Panc1 (cell line): ENCODE measurements at regions of chr17 and their contacts with region 1.

Region 1: GRCh38 chr17:57051886-57052361 is 33.1 kb upstream of the AKAP1 start:
- DNase-seq: no peak
- ATAC-seq: no peak
- H3K4me3 ChIP-seq: no peak overlapping the region
- H3K27ac ChIP-seq: no peak overlapping the region
- H3K4me1 ChIP-seq: peaks cover 6% of the 10 kb centered on the region
- H3K27me3 ChIP-seq: no peaks in the 10 kb centered on the region
- CTCF ChIP-seq: no peak

Region 2: GRCh38 chr17:57021226-57021940 is 30.5 kb before region 1 on chr17:
- CTCF ChIA-PET with region 1: no interaction called
- POLR2A ChIA-PET with region 1: interaction called, 10 read pairs
- in situ Hi-C with region 1: no loop called
- intact Hi-C with region 1: no loop called
- DNase-seq: peak; percentile 15
- ATAC-seq: peak; percentile 56; the same call in 1 of the 2 replicates
- H3K4me3 ChIP-seq: no peak overlapping the region
- H3K27ac ChIP-seq: no peak overlapping the region
- H3K4me1 ChIP-seq: no peaks in the 10 kb centered on the region
- H3K27me3 ChIP-seq: no peaks in the 10 kb centered on the region
- CTCF ChIP-seq: no peak